HepG2 (cell line): ENCODE measurements at regions of chr19 and their contacts with region 1.

Region 1: GRCh38 chr19:44718441-44719261 is 19.7 kb downstream of the CEACAM16 start:
- DNase-seq: peak; percentile 98
- ATAC-seq: peak; percentile 75
- H3K4me3 ChIP-seq: peak overlapping the region; percentile 62 to 82 (median 66)
- H3K27ac ChIP-seq: peak overlapping the region; percentile 95
- H3K4me1 ChIP-seq: peaks cover 75% of the 10 kb centered on the region
- H3K27me3 ChIP-seq: no peaks in the 10 kb centered on the region; a peak in 1 of 5 replicates
- CTCF ChIP-seq: no peak; the same call in 1 of the 2 replicates
- EP300 ChIP-seq: peak; percentile 60 to 96; a peak in 3 of 4 replicates
- POLR2A ChIP-seq: peak; percentile 44 to 74; a peak in 3 of 4 replicates
- RAD21 ChIP-seq: peak; percentile 38

Region 2: GRCh38 chr19:44741841-44742352 is 23.2 kb after region 1 on chr19:
- CTCF ChIA-PET with region 1: interaction called, 3 read pairs
- POLR2A ChIA-PET with region 1: interaction called, 45 read pairs
- in situ Hi-C with region 1: no loop called
- intact Hi-C with region 1: no loop called
- DNase-seq: peak; percentile 78
- ATAC-seq: peak; percentile 44
- H3K4me3 ChIP-seq: peak overlapping the region; percentile 27 to 72 (median 53); a peak in 5 of 6 replicates
- H3K27ac ChIP-seq: peak overlapping the region; percentile 73
- H3K4me1 ChIP-seq: peaks cover 100% of the 10 kb centered on the region
- H3K27me3 ChIP-seq: no peaks in the 10 kb centered on the region
- CTCF ChIP-seq: no peak
- EP300 ChIP-seq: peak; percentile 44 to 61; a peak in 1 of 4 replicates
- POLR2A ChIP-seq: peak in 1 of 2 experiments; percentile 28; a peak in 1 of 4 replicates
- RAD21 ChIP-seq: no peak

Region 3: DNA sequence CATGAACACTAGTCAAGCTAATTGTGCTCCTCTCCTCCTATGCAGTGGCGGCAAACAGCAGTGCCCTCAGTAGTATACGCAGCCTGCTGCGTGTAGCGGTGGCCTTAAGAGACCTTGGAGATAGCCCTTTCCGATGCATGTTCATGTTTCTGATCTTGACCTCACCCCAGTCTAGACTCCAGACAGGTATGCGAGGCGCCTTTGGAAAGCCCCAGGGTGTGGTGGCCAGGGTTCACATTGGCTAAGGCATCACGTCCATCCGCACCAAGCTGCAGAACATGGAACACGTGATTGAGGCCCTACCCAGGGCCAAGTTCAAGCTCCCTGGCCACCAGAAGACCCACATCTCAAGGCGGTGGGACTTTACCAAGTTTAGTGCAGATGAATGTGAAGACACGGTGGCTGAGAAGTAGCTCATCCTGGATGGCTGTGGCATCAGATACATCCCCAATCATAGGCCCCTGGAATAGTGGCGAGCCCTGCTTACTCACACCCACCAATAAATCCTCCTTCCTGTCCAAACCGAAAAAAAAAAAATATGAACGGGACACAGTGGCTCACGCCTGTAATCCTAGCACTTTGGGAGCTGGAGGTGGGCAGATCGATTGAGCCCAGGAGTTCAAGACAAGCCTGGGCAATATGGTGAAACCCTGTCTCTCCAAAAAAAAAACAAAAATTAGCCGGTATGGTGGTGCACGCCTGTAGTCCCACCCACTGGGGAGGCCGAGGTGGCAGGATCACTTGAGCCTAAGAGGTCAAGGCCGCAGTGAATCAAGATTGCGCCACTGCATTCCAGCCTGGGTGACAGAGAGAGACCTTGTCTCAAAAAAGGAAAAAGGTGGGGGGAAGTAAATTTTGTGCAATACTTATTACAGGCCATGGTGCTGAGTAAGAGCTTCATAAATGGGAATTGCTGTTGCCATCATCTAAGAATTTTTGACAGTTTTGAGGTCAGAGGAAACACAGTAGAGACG is 46.6 kb after region 1 on chr19:
- CTCF ChIA-PET with region 1: interaction called, 50 read pairs
- POLR2A ChIA-PET with region 1: interaction called, 42 read pairs
- in situ Hi-C with region 1: no loop called
- intact Hi-C with region 1: no loop called
- DNase-seq: peak; percentile 91
- ATAC-seq: peak; percentile 61
- H3K4me3 ChIP-seq: 0 out of 6 replicates have a peak overlapping the region, but pooled peaks of 1 of the 3 experiments have one; percentile 3
- H3K27ac ChIP-seq: peak overlapping the region; percentile 51
- H3K4me1 ChIP-seq: peaks cover 61% of the 10 kb centered on the region
- H3K27me3 ChIP-seq: no peaks in the 10 kb centered on the region
- CTCF ChIP-seq: no peak
- EP300 ChIP-seq: peak; percentile 71 to 87; a peak in 3 of 4 replicates
- POLR2A ChIP-seq: no peak
- RAD21 ChIP-seq: no peak

Region 4: GRCh38 chr19:44770550-44771257 is 52.1 kb after region 1 on chr19:
- CTCF ChIA-PET with region 1: interaction called, 50 read pairs
- POLR2A ChIA-PET with region 1: interaction called, 42 read pairs
- in situ Hi-C with region 1: no loop called
- intact Hi-C with region 1: no loop called
- DNase-seq: peak; percentile 89
- ATAC-seq: peak; percentile 98
- H3K4me3 ChIP-seq: no peak overlapping the region
- H3K27ac ChIP-seq: no peak overlapping the region
- H3K4me1 ChIP-seq: peaks cover 46% of the 10 kb centered on the region
- H3K27me3 ChIP-seq: no peaks in the 10 kb centered on the region
- CTCF ChIP-seq: peak; percentile 91
- EP300 ChIP-seq: no peak
- POLR2A ChIP-seq: no peak
- RAD21 ChIP-seq: peak; percentile 95